Left ventricle myocardium inferior (tissue), 1 donor: ENCODE measurements at regions of chr11 and their contacts with region 1.

Region 1: GRCh38 chr11:69683764-69684333 is 8.7 kb upstream of the LTO1 start:
- DNase-seq: no peak
- H3K4me3 ChIP-seq: no peak overlapping the region
- H3K27ac ChIP-seq: no peak overlapping the region
- H3K4me1 ChIP-seq: peaks cover 8% of the 10 kb centered on the region
- H3K27me3 ChIP-seq: peaks cover 27% of the 10 kb centered on the region
- CTCF ChIP-seq: peak; percentile 47

Region 2: DNA sequence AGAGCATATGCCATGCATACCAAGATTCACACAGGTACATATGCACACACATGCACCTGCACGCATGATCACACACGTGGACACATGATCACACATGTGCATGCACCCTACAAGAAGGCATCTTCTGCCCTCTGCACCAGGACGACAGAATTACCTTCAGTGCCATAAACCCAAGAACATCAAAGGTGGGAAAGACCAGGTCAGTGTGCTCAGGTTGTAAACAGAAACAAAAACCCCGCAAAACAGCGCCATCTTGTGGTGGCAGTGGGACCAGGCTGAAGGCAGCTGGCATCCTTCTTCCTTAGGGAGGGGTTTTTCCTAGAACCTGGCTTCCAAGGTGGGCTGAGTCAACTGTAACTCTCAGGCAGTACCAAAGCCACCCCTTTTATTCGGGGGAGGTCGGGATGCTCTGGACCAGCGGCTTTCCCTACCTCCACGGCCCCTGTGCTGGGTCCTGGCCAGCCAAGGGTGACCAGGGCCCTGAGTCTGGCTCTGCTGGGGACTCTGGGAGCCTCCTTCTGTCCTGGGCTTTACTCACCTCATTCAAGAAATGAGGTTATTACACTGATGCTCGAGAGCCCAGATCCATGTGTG is 204.7 kb after region 1 on chr11:
- intact Hi-C with region 1: loop called (anchors 5 kb)
- DNase-seq: peak; percentile 53
- H3K4me3 ChIP-seq: no peak overlapping the region
- H3K27ac ChIP-seq: no peak overlapping the region
- H3K4me1 ChIP-seq: peaks cover 5% of the 10 kb centered on the region
- H3K27me3 ChIP-seq: peaks cover 71% of the 10 kb centered on the region
- CTCF ChIP-seq: peak; percentile 90

Region 3: GRCh38 chr11:69972351-69972802 is 288.5 kb after region 1 on chr11:
- intact Hi-C with region 1: no loop called
- DNase-seq: no peak
- H3K4me3 ChIP-seq: no peak overlapping the region
- H3K27ac ChIP-seq: no peak overlapping the region
- H3K4me1 ChIP-seq: no peaks in the 10 kb centered on the region
- H3K27me3 ChIP-seq: peaks cover 63% of the 10 kb centered on the region
- CTCF ChIP-seq: no peak